Activated CD8-positive, alpha-beta T cell treated with anti-CD3 and anti-CD28 coated beads for 36 hours (primary cell): ENCODE measurements at regions of chr11 and their contacts with region 1.

Region 1: DNA sequence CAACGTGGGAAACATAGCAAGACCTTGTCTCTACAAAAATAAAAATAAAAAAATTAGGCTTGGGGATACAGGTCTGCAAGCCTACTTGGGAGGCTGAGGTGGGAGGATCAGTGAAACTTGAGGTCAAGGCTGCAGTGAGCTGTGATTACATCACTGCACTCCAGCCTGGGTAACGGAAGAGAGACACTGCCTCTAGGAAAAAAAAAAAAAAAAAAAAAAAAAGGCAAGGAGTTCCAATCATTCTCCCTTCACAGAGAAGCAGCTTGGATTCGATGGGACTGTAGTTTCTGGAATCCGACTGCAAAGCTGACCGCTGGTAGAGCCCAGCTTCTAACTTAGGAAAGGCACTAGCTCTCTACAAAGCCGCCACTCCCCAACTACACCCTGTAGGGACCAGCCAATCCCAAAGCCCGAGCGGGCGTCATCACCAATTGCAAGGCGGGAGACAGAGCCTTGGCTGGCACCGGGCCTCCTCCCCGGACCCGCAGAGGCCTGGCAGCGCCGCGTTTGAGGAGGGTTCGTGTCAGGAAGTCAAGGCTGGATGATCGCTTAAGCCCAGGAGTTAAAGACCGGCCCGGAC is 699 bp upstream of the DDB2 start:
- DNase-seq: peak; percentile 93
- ATAC-seq: peak; percentile 74
- H3K4me3 Mint-ChIP-seq: peak overlapping the region; percentile 93
- H3K27ac Mint-ChIP-seq: peak overlapping the region; percentile 100
- H3K4me1 Mint-ChIP-seq: peaks cover 24% of the 10 kb centered on the region
- H3K27me3 Mint-ChIP-seq: no peaks in the 10 kb centered on the region
- CTCF ChIP-seq: no peak

Region 2: DNA sequence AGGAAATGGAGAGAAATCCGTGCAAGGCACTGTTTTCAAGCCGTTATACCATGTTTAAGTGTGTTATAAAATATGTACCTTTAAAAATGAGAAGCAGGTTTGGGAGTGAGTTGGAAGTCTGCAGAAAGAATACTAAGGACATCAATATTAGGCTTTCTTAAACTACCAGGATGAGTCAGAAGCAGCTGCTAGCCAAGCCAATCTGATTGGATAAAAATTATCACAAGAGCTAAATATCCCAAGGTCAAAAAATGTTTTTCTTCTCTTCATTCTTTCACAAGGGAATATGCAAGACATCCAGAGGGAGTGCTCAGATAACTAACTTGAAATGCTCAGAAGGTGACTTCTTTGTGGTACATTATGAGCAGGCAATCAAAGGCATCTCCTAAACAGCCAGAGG is 348.7 kb before region 1 on chr11:
- CTCF ChIA-PET with region 1: no interaction called
- POLR2A ChIA-PET with region 1: no interaction called
- intact Hi-C with region 1: no loop called
- DNase-seq: no peak
- ATAC-seq: no peak
- H3K4me3 Mint-ChIP-seq: no peak overlapping the region
- H3K27ac Mint-ChIP-seq: no peak overlapping the region
- H3K4me1 Mint-ChIP-seq: no peaks in the 10 kb centered on the region
- H3K27me3 Mint-ChIP-seq: peaks cover 3% of the 10 kb centered on the region
- CTCF ChIP-seq: no peak

Region 3: GRCh38 chr11:47176328-47177228 is 37.5 kb before region 1 on chr11 and contains the start of gene ARFGAP2:
- CTCF ChIA-PET with region 1: interaction called, 43 read pairs
- POLR2A ChIA-PET with region 1: interaction called, 41 read pairs
- intact Hi-C with region 1: loop called (anchors 5 kb)
- DNase-seq: peak; percentile 97
- ATAC-seq: peak; percentile 94
- H3K4me3 Mint-ChIP-seq: peak within 1 kb of the TSS; percentile 94
- H3K27ac Mint-ChIP-seq: peak within 1 kb of the TSS; percentile 100
- H3K4me1 Mint-ChIP-seq: peaks cover 43% of the 10 kb centered on the region
- H3K27me3 Mint-ChIP-seq: no peaks in the 10 kb centered on the region
- CTCF ChIP-seq: no peak
- total RNA-seq, gene ARFGAP2: 70.1 to 71.7 TPM

Region 4: GRCh38 chr11:47225552-47226400 is 11.7 kb after region 1 on chr11:
- CTCF ChIA-PET with region 1: interaction called, 3 read pairs
- POLR2A ChIA-PET with region 1: interaction called, 63 read pairs
- intact Hi-C with region 1: no loop called
- DNase-seq: peak; percentile 54
- ATAC-seq: peak; percentile 96
- H3K4me3 Mint-ChIP-seq: peak overlapping the region; percentile 38
- H3K27ac Mint-ChIP-seq: peak overlapping the region; percentile 74
- H3K4me1 Mint-ChIP-seq: peaks cover 29% of the 10 kb centered on the region
- H3K27me3 Mint-ChIP-seq: no peaks in the 10 kb centered on the region
- CTCF ChIP-seq: no peak

Region 5: GRCh38 chr11:47241841-47242301 is 27.8 kb after region 1 on chr11:
- CTCF ChIA-PET with region 1: no interaction called
- POLR2A ChIA-PET with region 1: interaction called, 63 read pairs
- intact Hi-C with region 1: no loop called
- DNase-seq: no peak
- ATAC-seq: peak; percentile 51
- H3K4me3 Mint-ChIP-seq: no peak overlapping the region
- H3K27ac Mint-ChIP-seq: peak overlapping the region; percentile 0
- H3K4me1 Mint-ChIP-seq: peaks cover 3% of the 10 kb centered on the region
- H3K27me3 Mint-ChIP-seq: no peaks in the 10 kb centered on the region
- CTCF ChIP-seq: no peak

Region 6: DNA sequence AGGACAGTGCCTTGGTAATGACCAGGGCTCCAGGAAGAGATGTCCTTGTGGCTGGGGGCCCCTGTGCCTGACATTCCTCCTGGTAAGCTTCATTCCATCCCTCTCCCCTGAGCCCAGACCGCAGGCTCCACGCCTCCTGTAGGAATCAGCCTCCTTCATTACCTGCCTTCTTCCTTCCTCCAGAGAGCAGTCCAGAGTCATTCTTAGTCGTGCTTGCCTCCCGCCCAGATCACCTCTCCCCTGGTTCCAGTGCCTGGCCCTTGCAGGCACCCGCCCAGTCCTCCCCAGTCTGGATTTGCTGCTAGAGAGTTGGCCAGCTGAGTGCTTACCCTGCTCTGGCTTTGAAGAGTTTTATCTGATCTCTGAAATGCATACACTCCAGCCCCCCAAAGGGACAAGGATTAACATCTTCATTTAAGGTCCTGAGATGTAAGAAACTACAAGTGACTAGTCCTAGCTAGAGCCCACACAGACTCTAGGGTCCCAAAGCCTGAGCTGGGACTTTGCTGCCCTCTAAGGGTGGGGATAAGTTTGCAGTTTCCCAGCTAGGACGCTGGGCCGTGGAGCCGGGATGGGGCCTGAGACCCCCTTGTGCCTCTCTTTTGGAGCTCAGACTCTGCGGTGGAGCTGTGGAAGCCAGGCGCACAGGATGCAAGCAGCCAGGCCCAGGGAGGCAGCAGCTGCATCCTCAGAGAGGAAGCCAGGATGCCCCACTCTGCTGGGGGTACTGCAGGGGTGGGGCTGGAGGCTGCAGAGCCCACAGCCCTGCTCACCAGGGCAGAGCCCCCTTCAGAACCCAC is 45.3 kb after region 1 on chr11:
- CTCF ChIA-PET with region 1: interaction called, 6 read pairs
- POLR2A ChIA-PET with region 1: interaction called, 5 read pairs
- intact Hi-C with region 1: loop called (anchors 5 kb)
- DNase-seq: peak; percentile 59
- ATAC-seq: peak; percentile 89
- H3K4me3 Mint-ChIP-seq: no peak overlapping the region
- H3K27ac Mint-ChIP-seq: no peak overlapping the region
- H3K4me1 Mint-ChIP-seq: peaks cover 16% of the 10 kb centered on the region
- H3K27me3 Mint-ChIP-seq: no peaks in the 10 kb centered on the region
- CTCF ChIP-seq: peak; percentile 67